Right ventricle myocardium inferior (tissue), 1 donor: ENCODE measurements at regions of chr17 and their contacts with region 1.

Region 1: GRCh38 chr17:43878260-43879175 is 28.8 kb downstream of the MPP2 start:
- DNase-seq: peak; percentile 84
- ATAC-seq: peak; percentile 70

Region 2: GRCh38 chr17:43846221-43846712 is 32.3 kb before region 1 on chr17:
- intact Hi-C with region 1: no loop called
- DNase-seq: peak; percentile 90
- ATAC-seq: peak; percentile 97

Region 3: DNA sequence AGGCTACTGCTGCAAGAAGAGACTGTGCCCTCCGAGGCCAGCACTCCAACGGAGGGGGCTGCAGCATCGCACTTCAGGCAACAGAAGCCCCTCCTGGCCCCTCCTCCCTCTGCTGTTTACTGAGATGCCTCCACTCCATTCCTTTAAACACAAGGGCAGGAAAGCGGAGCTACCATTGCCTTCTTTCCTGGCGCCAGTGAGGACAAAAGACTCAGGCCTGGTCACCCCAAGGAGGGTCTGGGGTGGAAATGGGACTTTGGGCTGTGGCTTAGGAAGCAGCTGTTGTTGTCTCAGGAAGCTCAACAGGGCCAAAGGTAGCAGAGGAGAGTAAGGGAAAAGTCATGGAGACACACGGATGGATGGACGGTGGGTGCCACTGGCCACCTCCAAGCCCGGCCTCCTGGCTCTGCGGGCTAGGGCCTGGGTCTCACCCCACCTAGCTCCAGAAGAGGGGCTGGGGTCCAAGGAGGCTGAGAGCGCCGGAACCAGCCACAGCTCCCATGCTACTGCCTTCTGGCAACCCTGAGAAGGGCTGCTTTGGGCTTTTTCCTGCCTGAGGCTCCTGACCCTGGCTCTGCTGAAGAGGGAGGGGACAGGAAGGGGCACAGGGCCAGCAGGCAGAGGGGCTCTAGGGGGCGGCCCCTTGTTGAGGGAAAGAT is 20.4 kb before region 1 on chr17:
- intact Hi-C with region 1: no loop called
- DNase-seq: peak; percentile 30
- ATAC-seq: no peak

Region 4: DNA sequence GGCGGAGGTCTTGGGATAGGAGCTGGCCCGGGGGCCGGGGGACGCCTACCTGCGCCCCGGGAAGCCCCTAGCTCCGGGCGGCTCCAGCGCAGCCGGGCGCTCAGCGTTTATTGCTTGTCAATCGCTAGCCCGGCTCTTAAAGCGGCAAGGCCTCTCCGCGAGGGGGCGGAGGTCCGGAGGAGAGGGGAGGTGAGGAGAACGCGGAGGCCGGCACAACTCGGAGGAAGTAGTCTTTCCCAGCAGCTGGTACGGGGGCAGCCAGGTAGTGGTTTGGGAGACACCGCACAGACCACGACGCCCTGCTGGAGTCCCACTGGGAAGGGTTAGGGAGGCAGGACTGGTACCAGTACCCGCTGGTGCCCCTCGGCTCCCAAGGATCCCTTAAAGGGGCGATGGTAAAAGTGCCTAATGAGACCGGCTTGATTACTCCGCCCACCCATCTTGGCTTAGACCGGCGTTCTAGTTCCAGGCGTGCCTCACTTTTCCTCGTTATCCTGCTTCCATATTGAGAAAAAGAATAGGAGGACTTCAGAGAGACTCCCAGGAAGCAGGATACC is 29.0 kb after region 1 on chr17 and contains the start of gene MPP2:
- intact Hi-C with region 1: loop called (anchors 2 kb)
- DNase-seq: peak; percentile 82
- ATAC-seq: peak; percentile 68
- total RNA-seq, gene MPP2: 16.2 TPM